ENCODE measurements at regions of chr11 and their contacts with region 1.

Region 1: DNA sequence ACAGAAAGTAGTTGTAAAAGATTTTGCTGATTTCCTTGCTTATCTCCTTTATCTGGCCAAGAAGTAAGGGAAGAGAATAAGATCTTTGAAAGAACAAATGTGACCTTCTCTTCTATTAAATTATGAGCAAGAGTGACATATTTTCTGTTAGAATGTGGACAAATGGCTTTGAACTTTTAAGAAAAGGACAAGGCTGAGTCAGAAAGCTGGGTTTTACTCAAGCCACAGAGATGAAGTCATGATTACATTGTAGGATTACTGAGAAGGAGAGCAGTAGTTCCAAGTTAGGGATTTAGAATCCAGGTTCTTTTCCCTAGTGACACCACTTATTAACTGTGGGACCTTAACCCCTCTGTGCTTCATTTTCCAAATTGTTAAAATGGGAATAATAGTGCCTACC is 13.5 kb downstream of the CCDC90B start:
- DNase-seq: no peak
- H3K4me3 ChIP-seq: no peak overlapping the region
- H3K4me3 Mint-ChIP-seq: no peak overlapping the region
- H3K27ac Mint-ChIP-seq: no peak overlapping the region
- H3K4me1 ChIP-seq: peaks cover 21% of the 10 kb centered on the region
- H3K4me1 Mint-ChIP-seq: peaks cover 27% of the 10 kb centered on the region
- H3K27me3 ChIP-seq: no peaks in the 10 kb centered on the region
- H3K27me3 Mint-ChIP-seq: no peaks in the 10 kb centered on the region
- CTCF ChIP-seq: no peak

Region 2: DNA sequence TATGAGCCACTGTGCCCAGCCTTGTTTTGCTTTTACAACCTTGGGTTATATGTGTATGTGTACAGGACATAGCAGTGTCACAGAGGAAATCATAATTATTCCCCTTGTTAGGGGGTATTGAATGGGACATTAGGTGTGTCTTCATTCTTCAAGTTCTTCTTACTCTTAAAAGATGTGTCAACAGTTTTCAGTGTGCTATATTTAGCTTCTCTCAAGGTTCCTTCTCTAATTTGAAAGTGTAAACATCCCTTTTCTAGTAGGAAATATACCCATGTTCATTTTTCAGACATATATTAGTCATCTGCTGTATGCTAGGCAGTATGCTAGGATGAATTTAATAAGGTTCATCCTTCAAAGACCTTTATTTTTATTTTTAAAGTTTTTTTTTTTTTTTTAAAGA is 98.6 kb before region 1 on chr11:
- CTCF ChIA-PET with region 1: no interaction called
- POLR2A ChIA-PET with region 1: no interaction called
- intact Hi-C with region 1: no loop called
- DNase-seq: no peak
- H3K4me3 ChIP-seq: no peak overlapping the region
- H3K4me3 Mint-ChIP-seq: no peak overlapping the region
- H3K27ac Mint-ChIP-seq: no peak overlapping the region
- H3K4me1 ChIP-seq: no peaks in the 10 kb centered on the region; the same call in 1 of the 2 replicates
- H3K4me1 Mint-ChIP-seq: peaks cover 17% of the 10 kb centered on the region
- H3K27me3 ChIP-seq: no peaks in the 10 kb centered on the region
- H3K27me3 Mint-ChIP-seq: no peaks in the 10 kb centered on the region
- CTCF ChIP-seq: no peak

Region 3: DNA sequence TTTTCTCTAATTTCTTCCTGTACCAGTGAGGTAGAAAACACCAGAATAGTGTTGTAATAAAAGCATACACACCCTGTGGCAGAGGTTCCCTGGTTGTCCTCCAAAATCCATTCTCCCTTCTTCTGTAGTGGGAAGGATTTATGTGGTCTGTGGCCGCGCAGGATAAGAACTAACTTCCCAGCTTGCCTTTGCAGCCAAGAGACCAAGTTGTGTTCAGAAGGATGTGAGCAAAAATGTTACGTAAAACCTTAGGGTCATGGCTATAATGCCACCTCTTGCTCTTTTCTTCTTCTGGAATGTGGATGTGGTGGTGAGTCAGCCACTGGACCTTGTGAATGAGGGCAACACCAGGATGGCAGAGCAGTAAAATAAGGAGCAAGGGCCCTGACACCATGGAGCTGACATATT is 14.9 kb before region 1 on chr11:
- CTCF ChIA-PET with region 1: no interaction called
- POLR2A ChIA-PET with region 1: no interaction called
- intact Hi-C with region 1: loop called (anchors 1 kb)
- DNase-seq: peak in 1 of 2 experiments; percentile 63
- H3K4me3 ChIP-seq: no peak overlapping the region
- H3K4me3 Mint-ChIP-seq: no peak overlapping the region
- H3K27ac Mint-ChIP-seq: peak overlapping the region; percentile 87
- H3K4me1 ChIP-seq: peaks cover 43% of the 10 kb centered on the region
- H3K4me1 Mint-ChIP-seq: peaks cover 32% of the 10 kb centered on the region
- H3K27me3 ChIP-seq: no peaks in the 10 kb centered on the region
- H3K27me3 Mint-ChIP-seq: no peaks in the 10 kb centered on the region
- CTCF ChIP-seq: no peak

Region 4: DNA sequence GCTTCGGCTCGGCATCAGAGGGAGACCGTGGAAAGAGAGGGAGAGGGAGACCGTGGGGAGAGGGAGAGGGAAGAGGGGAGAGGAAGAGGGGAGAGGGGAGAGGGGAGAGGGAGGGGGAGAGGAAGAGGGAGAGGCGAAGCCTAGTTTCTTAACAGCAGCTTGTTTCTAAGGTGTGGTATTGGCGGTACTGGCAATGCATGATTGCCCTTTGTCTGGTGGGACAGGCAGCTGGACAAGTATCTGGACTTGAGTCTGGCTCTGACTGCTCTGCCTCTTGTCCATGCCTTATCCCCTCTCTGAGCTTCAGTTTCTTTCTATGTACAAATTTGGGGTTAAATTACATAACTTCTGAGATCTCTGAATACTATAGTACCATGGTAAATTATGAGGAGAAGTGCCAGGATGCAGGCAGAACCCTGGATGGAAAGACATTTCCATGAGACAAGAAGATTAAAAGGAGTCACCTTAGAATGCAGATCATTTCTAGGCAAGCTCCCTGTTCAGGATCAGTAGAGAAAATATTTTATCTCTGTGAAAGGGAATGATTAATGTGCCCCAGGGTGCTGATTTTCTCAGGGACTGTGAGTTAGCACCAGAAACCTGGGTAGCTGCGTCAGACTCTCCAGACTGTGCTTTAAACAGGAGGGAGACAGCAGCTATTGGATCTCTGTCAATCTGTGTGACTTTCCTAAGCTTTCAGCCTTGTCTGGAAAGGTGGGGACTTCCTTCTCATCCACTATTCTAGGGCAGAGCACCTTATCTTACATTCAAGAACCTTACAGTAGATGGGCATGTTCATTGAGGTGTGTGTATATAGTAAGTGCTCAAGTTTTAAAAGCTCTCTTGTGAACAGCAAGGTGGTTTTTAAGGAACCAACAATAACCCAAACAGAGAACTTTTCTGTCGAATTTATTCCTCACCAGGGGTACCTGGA is 45.4 kb after region 1 on chr11:
- CTCF ChIA-PET with region 1: no interaction called
- POLR2A ChIA-PET with region 1: no interaction called
- intact Hi-C with region 1: no loop called
- DNase-seq: no peak
- H3K4me3 ChIP-seq: no peak overlapping the region
- H3K4me3 Mint-ChIP-seq: no peak overlapping the region
- H3K27ac Mint-ChIP-seq: no peak overlapping the region
- H3K4me1 ChIP-seq: peaks cover 20% of the 10 kb centered on the region
- H3K4me1 Mint-ChIP-seq: peaks cover 24% of the 10 kb centered on the region
- H3K27me3 ChIP-seq: no peaks in the 10 kb centered on the region
- H3K27me3 Mint-ChIP-seq: peaks cover 3% of the 10 kb centered on the region
- CTCF ChIP-seq: no peak

Measured in Caco-2 (cell line).